ENCODE measurements at regions of chr14 and their contacts with region 1.

Region 1: GRCh38 chr14:24135834-24136542 is at the start of gene PSME1:
- DNase-seq: peak; percentile 75
- ATAC-seq: peak; percentile 94
- H3K4me3 ChIP-seq: peak within 1 kb of the TSS; percentile 99
- H3K27ac ChIP-seq: peak within 1 kb of the TSS; percentile 95
- H3K4me1 ChIP-seq: peaks cover 40% of the 10 kb centered on the region
- H3K27me3 ChIP-seq: no peaks in the 10 kb centered on the region
- CTCF ChIP-seq: no peak
- EP300 ChIP-seq: no peak
- POLR2A ChIP-seq: peak; percentile 86
- RAD21 ChIP-seq: no peak
- polyA plus RNA-seq, gene PSME1: 1,299 to 1,378 TPM

Region 2: DNA sequence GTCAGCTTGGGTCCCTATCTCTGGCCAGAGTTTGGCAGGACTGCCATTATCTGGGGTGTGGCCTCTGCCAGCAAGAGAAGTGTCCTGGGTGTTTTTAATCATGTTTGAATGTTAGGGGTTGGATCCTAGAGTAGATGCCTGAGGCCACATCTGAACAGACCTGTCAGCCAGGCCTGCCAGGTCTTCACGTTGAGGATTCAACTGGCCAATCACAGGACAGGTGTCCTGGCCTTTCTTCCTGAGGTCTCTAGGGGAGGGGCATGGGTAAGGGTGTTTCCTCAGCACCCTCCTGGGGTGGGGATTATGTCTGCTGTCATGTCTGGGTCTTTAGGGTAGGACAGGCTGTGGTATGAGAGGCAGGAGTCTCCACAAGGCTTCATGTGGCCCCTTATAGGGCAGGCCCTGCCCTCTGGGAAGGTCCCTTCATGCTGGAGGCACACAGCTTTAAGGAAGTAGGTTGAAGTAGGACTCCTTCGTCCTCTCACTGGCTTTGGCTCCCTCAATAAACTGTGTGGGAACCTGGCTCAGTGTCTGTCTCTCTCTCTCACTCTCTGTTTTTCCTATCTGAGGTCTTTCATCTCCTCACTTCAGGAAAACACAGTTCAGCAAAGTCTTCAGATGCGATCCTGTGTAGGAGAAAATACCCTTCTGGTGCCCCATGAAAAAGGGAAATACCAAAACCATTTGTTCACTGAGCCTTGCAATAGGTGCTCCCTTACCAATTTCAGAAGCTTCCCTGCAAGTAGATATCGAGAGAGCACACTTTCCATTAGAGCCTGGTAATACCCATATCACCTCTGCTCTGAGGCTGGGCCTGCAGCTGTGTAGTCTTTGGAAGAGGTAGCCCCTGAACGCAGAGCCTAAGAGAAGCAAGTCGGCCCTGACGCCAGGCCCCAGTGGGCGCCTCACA is 12.2 kb before region 1 on chr14:
- CTCF ChIA-PET with region 1: interaction called, 39 read pairs
- POLR2A ChIA-PET with region 1: interaction called, 276 read pairs
- RAD21 ChIA-PET with region 1: interaction called, 69 read pairs
- SMC1A ChIA-PET with region 1: interaction called, 70 read pairs
- in situ Hi-C with region 1: no loop called
- intact Hi-C with region 1: no loop called
- DNase-seq: no peak
- ATAC-seq: peak; percentile 92
- H3K4me3 ChIP-seq: no peak overlapping the region
- H3K27ac ChIP-seq: peak overlapping the region; percentile 78
- H3K4me1 ChIP-seq: peaks cover 25% of the 10 kb centered on the region
- H3K27me3 ChIP-seq: no peaks in the 10 kb centered on the region
- CTCF ChIP-seq: no peak
- EP300 ChIP-seq: no peak
- POLR2A ChIP-seq: peak; percentile 43; the same call in 1 of the 2 replicates
- RAD21 ChIP-seq: no peak

Region 3: DNA sequence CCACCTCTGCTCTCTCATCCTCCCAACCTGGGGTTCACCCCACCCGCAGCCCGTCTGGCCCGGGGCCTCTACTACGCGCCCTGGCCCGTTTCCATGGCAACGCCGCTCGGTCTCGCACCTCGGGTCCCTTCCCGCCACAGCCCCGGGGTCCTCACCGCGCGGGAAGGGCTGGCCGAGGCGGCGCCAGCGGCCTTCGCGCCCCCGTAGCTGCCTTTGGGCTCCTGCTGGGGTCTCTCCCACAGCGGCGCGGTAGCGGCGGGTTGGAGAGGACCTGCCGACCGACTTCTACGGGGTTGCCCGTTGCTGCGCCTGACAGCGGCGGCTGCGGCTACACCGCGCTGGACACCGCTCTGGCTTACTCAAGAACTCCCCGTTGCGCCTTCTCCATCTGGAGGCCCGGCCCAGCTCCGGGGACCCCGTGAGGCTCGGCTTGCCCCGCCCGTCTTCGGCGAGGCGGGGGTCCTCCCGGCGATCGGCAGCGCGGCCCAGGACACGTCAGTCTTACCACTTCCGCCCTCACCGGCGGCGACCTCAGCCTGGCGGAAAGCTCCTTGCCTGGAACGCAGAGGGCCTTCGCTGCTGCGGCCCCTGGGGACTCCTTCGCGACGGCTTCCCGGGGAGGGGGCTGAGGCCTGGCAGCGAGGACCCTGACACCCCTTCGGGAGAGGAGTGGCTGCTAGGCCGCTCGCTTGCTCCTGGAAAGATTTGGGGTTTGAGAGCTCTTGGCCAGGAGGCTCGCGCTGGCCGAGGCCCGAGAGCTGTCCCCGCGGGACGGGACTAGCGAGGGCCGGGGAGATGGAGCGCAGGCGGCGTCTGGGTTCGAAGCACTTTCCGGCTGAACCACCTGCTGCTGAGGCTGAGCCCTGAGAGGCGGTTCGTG is 59.4 kb after region 1 on chr14 and contains the start of gene TM9SF1:
- CTCF ChIA-PET with region 1: interaction called, 4 read pairs
- POLR2A ChIA-PET with region 1: interaction called, 12 read pairs
- RAD21 ChIA-PET with region 1: interaction called, 3 read pairs
- SMC1A ChIA-PET with region 1: interaction called, 3 read pairs
- in situ Hi-C with region 1: no loop called
- intact Hi-C with region 1: no loop called
- DNase-seq: peak; percentile 52
- ATAC-seq: peak; percentile 93
- H3K4me3 ChIP-seq: peak within 1 kb of the TSS; percentile 68
- H3K27ac ChIP-seq: peak within 1 kb of the TSS; percentile 96
- H3K4me1 ChIP-seq: peaks cover 15% of the 10 kb centered on the region
- H3K27me3 ChIP-seq: no peaks in the 10 kb centered on the region
- CTCF ChIP-seq: no peak
- EP300 ChIP-seq: no peak
- POLR2A ChIP-seq: peak; percentile 95
- RAD21 ChIP-seq: no peak
- polyA plus RNA-seq, gene TM9SF1: 7.2 to 9.8 TPM

Region 4: GRCh38 chr14:24403294-24403998 is 267.5 kb after region 1 on chr14:
- CTCF ChIA-PET with region 1: no interaction called
- POLR2A ChIA-PET with region 1: no interaction called
- RAD21 ChIA-PET with region 1: no interaction called
- SMC1A ChIA-PET with region 1: no interaction called
- in situ Hi-C with region 1: no loop called
- intact Hi-C with region 1: no loop called
- DNase-seq: no peak
- ATAC-seq: no peak
- H3K4me3 ChIP-seq: no peak overlapping the region
- H3K27ac ChIP-seq: no peak overlapping the region
- H3K4me1 ChIP-seq: no peaks in the 10 kb centered on the region
- H3K27me3 ChIP-seq: peaks cover 3 to 8% of the 10 kb centered on the region in 2 experiments; a peak in 3 of 4 replicates
- CTCF ChIP-seq: no peak
- EP300 ChIP-seq: no peak
- POLR2A ChIP-seq: no peak
- RAD21 ChIP-seq: no peak

Region 5: GRCh38 chr14:24678801-24679247 is 542.8 kb after region 1 on chr14:
- CTCF ChIA-PET with region 1: no interaction called
- POLR2A ChIA-PET with region 1: no interaction called
- RAD21 ChIA-PET with region 1: no interaction called
- SMC1A ChIA-PET with region 1: no interaction called
- in situ Hi-C with region 1: no loop called
- intact Hi-C with region 1: no loop called
- DNase-seq: peak; percentile 72
- ATAC-seq: peak; percentile 88
- H3K4me3 ChIP-seq: peak overlapping the region; percentile 60; the same call in 1 of the 2 replicates
- H3K27ac ChIP-seq: peak overlapping the region; percentile 3; the same call in 1 of the 2 replicates
- H3K4me1 ChIP-seq: peaks cover 9% of the 10 kb centered on the region
- H3K27me3 ChIP-seq: no peaks in the 10 kb centered on the region
- CTCF ChIP-seq: peak; percentile 94 to 100 (median 98); a peak in 5 of 6 replicates
- EP300 ChIP-seq: no peak
- POLR2A ChIP-seq: no peak
- RAD21 ChIP-seq: peak; percentile 85